Right ventricle myocardium superior (tissue), 1 donor: ENCODE measurements at regions of chr3 and their contacts with region 1.

Region 1: GRCh38 chr3:40524568-40525285 is at the start of gene ZNF621:
- DNase-seq: peak; percentile 95
- ATAC-seq: peak; percentile 99
- total RNA-seq, gene ZNF621: 9.3 TPM

Region 2: GRCh38 chr3:40452876-40453730 is 71.6 kb before region 1 on chr3:
- intact Hi-C with region 1: loop called (anchors 10 kb)
- DNase-seq: peak; percentile 98
- ATAC-seq: peak; percentile 96